ENCODE measurements at regions of chr18 and their contacts with region 1.

Region 1: DNA sequence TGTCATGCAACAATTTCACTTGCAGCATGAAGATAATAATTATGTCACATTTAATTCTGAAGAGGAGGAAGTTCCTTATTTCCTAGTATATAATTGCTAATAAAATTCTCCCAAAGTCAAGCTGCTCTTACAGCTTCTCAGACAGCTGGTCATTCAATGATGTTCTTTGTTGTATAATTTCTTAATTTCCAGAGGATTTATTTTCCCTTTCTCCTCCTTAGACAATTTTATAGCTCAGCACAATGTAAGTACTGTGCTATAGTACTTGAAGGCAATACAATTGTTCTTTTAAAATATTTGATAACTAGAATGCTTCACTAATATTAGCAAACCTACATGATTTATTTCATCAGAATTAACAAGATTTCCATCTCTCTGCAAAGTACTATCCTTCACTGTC is 73.4 kb downstream of the ROCK1 start:
- DNase-seq: no peak
- ATAC-seq: no peak
- H3K4me3 ChIP-seq: no peak overlapping the region
- H3K4me3 Mint-ChIP-seq: no peak overlapping the region
- H3K27ac ChIP-seq: peak overlapping the region in 1 of 2 donors; percentile 15
- H3K27ac Mint-ChIP-seq: no peak overlapping the region
- H3K4me1 ChIP-seq: no peaks in the 10 kb centered on the region
- H3K4me1 Mint-ChIP-seq: peaks cover 5% of the 10 kb centered on the region
- H3K27me3 ChIP-seq: no peaks in the 10 kb centered on the region
- H3K27me3 Mint-ChIP-seq: no peaks in the 10 kb centered on the region
- CTCF ChIP-seq: no peak

Region 2: GRCh38 chr18:20988726-20989125 is 49.5 kb before region 1 on chr18:
- CTCF ChIA-PET with region 1: no interaction called
- POLR2A ChIA-PET with region 1: no interaction called
- intact Hi-C with region 1: loop called (anchors 10 kb)
- DNase-seq: no peak
- ATAC-seq: no peak
- H3K4me3 ChIP-seq: no peak overlapping the region
- H3K4me3 Mint-ChIP-seq: no peak overlapping the region
- H3K27ac ChIP-seq: no peak overlapping the region
- H3K27ac Mint-ChIP-seq: no peak overlapping the region
- H3K4me1 ChIP-seq: no peaks in the 10 kb centered on the region
- H3K4me1 Mint-ChIP-seq: no peaks in the 10 kb centered on the region
- H3K27me3 ChIP-seq: no peaks in the 10 kb centered on the region
- H3K27me3 Mint-ChIP-seq: no peaks in the 10 kb centered on the region
- CTCF ChIP-seq: no peak